ENCODE measurements at regions of chr10 and their contacts with region 1.

Region 1: DNA sequence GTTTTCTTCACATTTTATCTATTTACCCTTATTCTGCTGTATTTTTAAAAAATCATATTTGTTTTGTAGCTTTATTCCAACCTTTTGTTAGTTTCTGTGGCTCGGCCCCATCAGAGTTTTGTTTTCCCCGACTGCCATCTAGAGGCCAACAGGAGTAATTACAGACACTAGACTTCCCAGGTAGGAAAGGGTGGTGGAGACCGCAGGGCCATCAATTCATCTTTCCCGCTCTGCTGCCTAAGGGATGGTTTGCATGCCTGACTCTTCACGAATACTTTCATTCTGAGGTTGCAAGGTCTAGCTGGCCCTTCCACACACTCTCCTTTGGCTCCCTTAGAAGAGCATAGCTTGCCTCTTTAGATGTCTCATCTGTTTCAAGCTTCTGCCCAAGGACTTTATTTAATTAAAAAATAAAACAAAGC is 38.3 kb downstream of the LYZL2 start:
- DNase-seq: peak; percentile 62
- H3K4me3 ChIP-seq: no peak overlapping the region
- H3K27ac ChIP-seq: no peak overlapping the region
- H3K4me1 ChIP-seq: no peaks in the 10 kb centered on the region; a peak in 1 of 4 replicates
- H3K27me3 ChIP-seq: no peaks in the 10 kb centered on the region; the same call in 1 of the 2 replicates
- CTCF ChIP-seq: peak; percentile 87
- EP300 ChIP-seq: no peak
- RAD21 ChIP-seq: peak; percentile 87

Region 2: GRCh38 chr10:30359373-30360206 is 231.7 kb before region 1 on chr10:
- CTCF ChIA-PET with region 1: interaction called, 27 read pairs
- POLR2A ChIA-PET with region 1: no interaction called
- DNase-seq: peak; percentile 74
- H3K4me3 ChIP-seq: peak overlapping the region in 1 of 2 experiments; percentile 46; a peak in 1 of 4 replicates
- H3K27ac ChIP-seq: no peak overlapping the region
- H3K4me1 ChIP-seq: no peaks in the 10 kb centered on the region; a peak in 1 of 4 replicates
- H3K27me3 ChIP-seq: no peaks in the 10 kb centered on the region
- CTCF ChIP-seq: peak; percentile 75
- EP300 ChIP-seq: no peak
- RAD21 ChIP-seq: peak; percentile 37

Region 3: GRCh38 chr10:30392564-30392990 is 198.7 kb before region 1 on chr10:
- CTCF ChIA-PET with region 1: interaction called, 59 read pairs
- POLR2A ChIA-PET with region 1: interaction called, 3 read pairs
- DNase-seq: peak; percentile 89
- H3K4me3 ChIP-seq: peak overlapping the region; percentile 12 to 16; a peak in 2 of 4 replicates
- H3K27ac ChIP-seq: no peak overlapping the region
- H3K4me1 ChIP-seq: peaks cover 0 to 9% of the 10 kb centered on the region in 2 experiments; a peak in 1 of 4 replicates
- H3K27me3 ChIP-seq: peaks cover 7% of the 10 kb centered on the region; the same call in 1 of the 2 replicates
- CTCF ChIP-seq: peak; percentile 86
- EP300 ChIP-seq: no peak
- RAD21 ChIP-seq: peak; percentile 91

Region 4: DNA sequence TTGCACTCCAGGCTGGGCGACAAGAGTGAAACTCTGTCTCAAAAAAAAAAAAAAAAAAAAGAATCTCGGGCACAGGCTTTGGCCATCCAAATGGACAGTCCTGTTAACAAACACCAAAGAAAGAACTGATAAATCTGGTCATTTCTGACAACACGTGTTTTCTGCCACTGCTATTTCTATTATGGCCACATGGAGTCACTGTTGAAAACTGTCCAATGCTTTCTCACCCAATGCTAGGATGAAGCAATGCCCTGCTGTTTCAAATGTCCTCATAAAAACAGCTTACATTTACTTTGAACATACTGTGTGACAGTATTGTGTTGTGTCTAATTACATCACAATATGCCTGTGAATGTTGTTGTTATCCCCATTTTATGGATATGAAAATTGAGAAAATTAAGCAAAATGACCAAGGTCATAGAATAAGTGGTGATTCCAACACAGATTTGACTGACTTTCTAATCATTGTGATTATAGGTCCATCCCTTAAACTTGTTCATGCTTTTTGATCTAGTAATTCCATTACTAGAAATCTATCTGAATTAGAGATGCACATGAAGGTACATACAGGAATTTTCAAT is 177.2 kb before region 1 on chr10:
- CTCF ChIA-PET with region 1: interaction called, 45 read pairs
- POLR2A ChIA-PET with region 1: no interaction called
- DNase-seq: peak; percentile 64
- H3K4me3 ChIP-seq: no peak overlapping the region
- H3K27ac ChIP-seq: no peak overlapping the region
- H3K4me1 ChIP-seq: no peaks in the 10 kb centered on the region
- H3K27me3 ChIP-seq: no peaks in the 10 kb centered on the region
- CTCF ChIP-seq: peak; percentile 84
- EP300 ChIP-seq: no peak
- RAD21 ChIP-seq: peak; percentile 78

Region 5: DNA sequence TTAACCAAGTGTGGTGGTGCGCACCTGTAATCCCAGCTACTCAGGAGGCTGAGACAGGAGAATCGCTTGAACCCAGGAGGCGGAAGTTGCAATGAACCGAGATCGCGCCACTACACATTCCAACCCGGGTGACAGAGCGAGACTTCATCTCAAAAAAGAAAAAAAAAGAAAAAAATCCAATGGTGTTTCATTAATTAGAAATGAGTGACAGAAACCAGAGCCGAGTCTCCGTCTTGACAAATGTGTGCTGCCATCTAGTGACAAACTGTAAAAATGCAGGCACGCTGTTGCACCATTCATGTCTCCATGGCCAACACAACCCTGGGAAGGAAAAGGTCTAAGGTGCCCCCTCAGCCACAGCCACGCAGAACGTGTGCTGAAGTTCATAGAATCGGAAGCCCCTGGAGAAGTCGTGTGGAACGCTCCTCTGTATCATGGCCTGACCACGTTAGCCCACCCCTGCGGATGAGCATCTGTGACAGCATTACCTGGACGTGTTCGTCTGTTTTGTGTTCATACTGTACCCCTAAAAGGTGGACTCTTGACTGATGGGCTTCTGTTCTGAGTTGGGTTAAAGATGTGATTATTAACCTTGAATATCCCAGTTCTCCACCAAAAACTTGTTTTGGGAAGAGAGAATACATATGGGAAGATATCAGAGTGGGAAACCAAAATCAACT is 56.7 kb before region 1 on chr10:
- CTCF ChIA-PET with region 1: interaction called, 22 read pairs
- POLR2A ChIA-PET with region 1: no interaction called
- DNase-seq: peak; percentile 68
- H3K4me3 ChIP-seq: no peak overlapping the region; a peak in 1 of 4 replicates
- H3K27ac ChIP-seq: no peak overlapping the region
- H3K4me1 ChIP-seq: no peaks in the 10 kb centered on the region; a peak in 1 of 4 replicates
- H3K27me3 ChIP-seq: no peaks in the 10 kb centered on the region
- CTCF ChIP-seq: peak; percentile 89
- EP300 ChIP-seq: no peak
- RAD21 ChIP-seq: peak; percentile 89

Measured in SK-N-SH (cell line).